Left colon (tissue), 2 donors: ENCODE measurements at regions of chr2 and their contacts with region 1.

Region 1: GRCh38 chr2:64865073-64865830 is 123.9 kb upstream of the SLC1A4 start:
- DNase-seq: peak; percentile 52 to 74
- ATAC-seq: peak; percentile 80

Region 2: GRCh38 chr2:64523666-64524603 is 341.3 kb before region 1 on chr2 and contains the start of gene AFTPH:
- intact Hi-C with region 1: loop called in 1 of 2 experiments (anchors 10 kb)
- DNase-seq: peak; percentile 98 to 100
- ATAC-seq: peak; percentile 96
- total RNA-seq, gene AFTPH: 57.9 to 59.7 TPM

Region 3: GRCh38 chr2:64586883-64587481 is 278.3 kb before region 1 on chr2:
- intact Hi-C with region 1: loop called in 1 of 2 experiments (anchors 5 kb)
- DNase-seq: no peak
- ATAC-seq: peak; percentile 74

Region 4: GRCh38 chr2:64644177-64645004 is 220.9 kb before region 1 on chr2:
- intact Hi-C with region 1: loop called in 1 of 2 experiments (anchors 10 kb)
- DNase-seq: peak; percentile 76 to 84
- ATAC-seq: peak; percentile 62